Endothelial cell of umbilical vein (primary cell): ENCODE measurements at regions of chr6 and their contacts with region 1.

Region 1: GRCh38 chr6:89352278-89353117 is at the start of gene UBE2J1:
- DNase-seq: peak; percentile 94
- H3K4me3 ChIP-seq: peak within 1 kb of the TSS; percentile 93 to 100 (median 100)
- H3K27ac ChIP-seq: peak within 1 kb of the TSS; percentile 96
- H3K4me1 ChIP-seq: peaks cover 38% of the 10 kb centered on the region
- H3K27me3 ChIP-seq: no peaks in the 10 kb centered on the region
- CTCF ChIP-seq: no peak
- POLR2A ChIP-seq: peak; percentile 87
- total RNA-seq, gene UBE2J1: 84.9 and 96.6 TPM in 2 replicates

Region 2: GRCh38 chr6:88380083-88380482 is 972.4 kb before region 1 on chr6:
- CTCF ChIA-PET with region 1: no interaction called
- POLR2A ChIA-PET with region 1: no interaction called
- dilution Hi-C with region 1: no loop called
- intact Hi-C with region 1: loop called (anchors 5 kb)
- DNase-seq: peak; percentile 94
- H3K4me3 ChIP-seq: no peak overlapping the region
- H3K27ac ChIP-seq: peak overlapping the region; percentile 68
- H3K4me1 ChIP-seq: peaks cover 36% of the 10 kb centered on the region
- H3K27me3 ChIP-seq: no peaks in the 10 kb centered on the region
- CTCF ChIP-seq: no peak
- POLR2A ChIP-seq: no peak

Region 3: DNA sequence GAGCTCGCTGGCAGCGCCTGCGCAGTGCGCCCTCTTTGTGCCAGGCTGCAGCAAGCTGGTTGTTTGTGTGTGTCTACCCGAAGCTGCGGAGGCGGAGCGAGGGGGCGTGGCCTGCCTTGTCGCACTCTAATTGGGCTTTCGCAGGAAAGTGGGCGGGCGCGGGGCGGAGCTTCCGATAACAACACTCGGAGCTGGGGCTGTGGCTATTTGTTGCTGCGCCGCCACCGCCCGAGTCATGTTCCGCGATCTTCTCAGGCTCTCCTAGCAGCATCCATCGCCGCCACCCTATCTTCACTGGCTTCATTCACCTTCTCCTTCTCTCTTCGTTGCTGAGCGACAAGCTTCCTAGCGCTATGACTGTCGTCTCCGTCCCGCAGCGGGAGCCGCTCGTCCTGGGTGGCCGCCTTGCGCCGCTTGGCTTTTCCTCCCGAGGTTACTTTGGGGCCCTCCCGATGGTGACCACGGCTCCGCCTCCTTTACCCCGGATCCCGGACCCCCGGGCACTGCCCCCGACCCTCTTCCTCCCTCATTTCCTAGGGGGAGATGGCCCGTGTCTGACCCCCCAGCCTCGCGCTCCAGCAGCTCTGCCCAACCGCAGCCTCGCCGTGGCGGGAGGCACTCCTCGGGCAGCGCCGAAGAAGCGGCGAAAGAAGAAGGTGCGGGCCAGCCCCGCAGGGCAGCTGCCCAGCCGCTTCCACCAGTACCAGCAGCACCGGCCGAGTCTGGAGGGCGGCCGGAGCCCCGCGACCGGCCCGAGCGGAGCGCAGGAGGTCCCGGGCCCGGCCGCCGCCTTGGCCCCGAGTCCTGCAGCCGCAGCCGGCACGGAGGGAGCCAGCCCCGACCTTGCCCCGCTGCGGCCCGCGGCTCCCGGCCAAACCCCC is 271.7 kb before region 1 on chr6 and contains the start of gene PNRC1:
- CTCF ChIA-PET with region 1: no interaction called
- POLR2A ChIA-PET with region 1: interaction called, 4 read pairs
- dilution Hi-C with region 1: no loop called
- intact Hi-C with region 1: loop called (anchors 1 kb)
- DNase-seq: peak; percentile 99
- H3K4me3 ChIP-seq: peak within 1 kb of the TSS; percentile 89 to 97 (median 94)
- H3K27ac ChIP-seq: peak within 1 kb of the TSS; percentile 92
- H3K4me1 ChIP-seq: peaks cover 11% of the 10 kb centered on the region
- H3K27me3 ChIP-seq: no peaks in the 10 kb centered on the region
- CTCF ChIP-seq: no peak
- POLR2A ChIP-seq: peak; percentile 91
- total RNA-seq, gene PNRC1: 87.9 and 88.4 TPM in 2 replicates

Region 4: DNA sequence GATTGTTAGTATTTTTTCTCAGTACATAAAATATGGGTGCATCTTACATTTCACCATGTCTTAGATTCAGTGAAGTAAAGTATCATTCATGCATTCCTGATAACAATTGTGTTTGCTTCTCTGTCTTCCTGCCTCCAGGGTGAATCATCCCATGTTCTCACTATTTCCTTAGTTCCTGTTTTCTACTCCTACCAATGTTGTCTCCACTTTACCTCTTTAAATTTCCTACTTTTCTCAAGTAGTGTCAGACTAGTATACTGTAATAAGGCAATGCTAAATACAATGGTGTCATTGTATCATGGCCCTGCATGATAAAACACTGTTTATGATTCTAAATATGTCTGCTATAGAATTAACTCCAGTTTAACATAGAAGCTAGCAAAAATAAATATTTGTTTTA is 97.9 kb before region 1 on chr6:
- CTCF ChIA-PET with region 1: no interaction called
- POLR2A ChIA-PET with region 1: no interaction called
- dilution Hi-C with region 1: no loop called
- intact Hi-C with region 1: loop called (anchors 5 kb)
- DNase-seq: peak; percentile 75
- H3K4me3 ChIP-seq: no peak overlapping the region
- H3K27ac ChIP-seq: peak overlapping the region; percentile 34
- H3K4me1 ChIP-seq: peaks cover 24% of the 10 kb centered on the region
- H3K27me3 ChIP-seq: no peaks in the 10 kb centered on the region
- CTCF ChIP-seq: no peak
- POLR2A ChIP-seq: no peak

Region 5: DNA sequence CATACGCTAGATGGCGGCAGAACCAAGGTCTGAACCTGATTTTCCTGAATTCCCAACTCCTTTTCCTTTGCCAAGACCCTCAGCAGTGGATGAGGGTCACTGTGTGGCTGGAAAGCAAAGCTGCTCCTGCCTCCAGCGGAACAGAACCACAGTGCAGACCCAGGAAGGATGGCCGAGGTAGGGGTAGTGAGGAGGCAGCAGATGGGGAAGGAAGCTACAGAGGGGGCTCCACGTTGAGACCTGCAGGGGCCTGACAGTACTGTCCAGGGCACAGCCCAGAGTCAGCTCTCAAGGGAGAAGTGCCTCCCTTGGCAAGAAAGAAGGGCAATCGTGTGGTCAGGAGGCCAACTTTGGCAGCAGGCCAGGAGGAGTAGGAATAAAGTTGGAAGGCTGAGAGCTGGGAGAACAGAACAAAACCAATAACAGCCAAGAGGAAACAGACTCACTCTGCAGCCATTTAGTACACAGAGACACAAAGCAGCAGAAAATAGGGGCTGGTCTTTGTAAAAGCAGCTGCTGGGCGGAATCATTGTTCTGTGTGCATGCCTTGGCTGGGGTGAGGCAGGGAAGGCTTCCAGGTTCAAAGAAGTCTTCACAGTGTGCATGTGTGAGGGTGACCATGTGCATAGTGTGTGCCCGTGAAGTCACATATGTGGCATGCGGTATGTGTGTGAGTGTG is 40.5 kb before region 1 on chr6:
- CTCF ChIA-PET with region 1: interaction called, 56 read pairs
- POLR2A ChIA-PET with region 1: interaction called, 10 read pairs
- dilution Hi-C with region 1: no loop called
- intact Hi-C with region 1: loop called (anchors 1 kb)
- DNase-seq: peak; percentile 95
- H3K4me3 ChIP-seq: no peak overlapping the region
- H3K27ac ChIP-seq: peak overlapping the region; percentile 67
- H3K4me1 ChIP-seq: peaks cover 22% of the 10 kb centered on the region
- H3K27me3 ChIP-seq: no peaks in the 10 kb centered on the region
- CTCF ChIP-seq: peak; percentile 51 to 81
- POLR2A ChIP-seq: no peak

Region 6: DNA sequence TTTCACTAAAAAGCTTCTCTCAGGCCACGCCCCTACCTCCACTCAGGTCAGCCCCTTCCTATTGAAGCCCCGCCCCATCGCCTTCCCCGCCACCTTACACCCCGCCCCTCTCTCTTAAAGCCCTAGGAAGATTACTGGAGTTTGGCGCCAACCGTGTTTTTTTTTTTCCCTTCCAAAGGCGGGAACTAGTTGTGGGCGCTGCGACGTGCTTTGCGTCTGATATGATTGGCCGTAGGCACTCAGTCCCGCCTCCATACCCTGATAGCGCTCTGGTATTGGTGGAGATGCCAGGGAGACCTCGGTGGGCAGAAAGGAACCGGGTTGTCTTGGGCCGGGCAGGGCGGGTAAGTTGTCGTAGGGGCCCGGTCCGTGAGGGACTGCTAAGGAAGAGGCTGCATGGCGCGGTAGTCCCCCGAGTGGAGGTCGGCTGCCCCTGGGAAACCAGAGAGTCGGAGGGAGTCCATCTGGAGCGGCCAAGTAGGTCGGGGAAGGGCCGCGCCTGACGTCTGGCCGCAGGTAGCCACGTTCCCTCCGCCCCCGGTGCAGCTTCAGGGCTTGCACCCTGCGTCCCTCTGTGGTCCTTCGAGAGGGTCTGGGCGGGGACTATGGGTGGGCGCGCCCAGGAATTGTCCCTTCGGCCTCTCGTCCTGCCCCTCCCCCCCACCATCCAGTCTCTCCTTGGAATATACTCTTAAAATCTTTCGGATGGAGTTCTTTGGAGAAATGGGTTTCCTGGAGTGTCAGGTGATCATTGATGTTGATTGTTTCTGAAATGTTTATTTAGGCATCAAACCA is 477.3 kb after region 1 on chr6 and contains the start of gene CASP8AP2:
- CTCF ChIA-PET with region 1: no interaction called
- POLR2A ChIA-PET with region 1: no interaction called
- dilution Hi-C with region 1: no loop called
- intact Hi-C with region 1: loop called (anchors 5 kb)
- DNase-seq: peak; percentile 100
- H3K4me3 ChIP-seq: peak within 1 kb of the TSS; percentile 94 to 97 (median 95)
- H3K27ac ChIP-seq: peak within 1 kb of the TSS; percentile 42
- H3K4me1 ChIP-seq: peaks cover 10% of the 10 kb centered on the region
- H3K27me3 ChIP-seq: no peaks in the 10 kb centered on the region
- CTCF ChIP-seq: no peak
- POLR2A ChIP-seq: peak; percentile 50
- total RNA-seq, gene CASP8AP2: 20.2 and 22.0 TPM in 2 replicates